ENCODE measurements at regions of chr6 and their contacts with region 1.

Region 1: DNA sequence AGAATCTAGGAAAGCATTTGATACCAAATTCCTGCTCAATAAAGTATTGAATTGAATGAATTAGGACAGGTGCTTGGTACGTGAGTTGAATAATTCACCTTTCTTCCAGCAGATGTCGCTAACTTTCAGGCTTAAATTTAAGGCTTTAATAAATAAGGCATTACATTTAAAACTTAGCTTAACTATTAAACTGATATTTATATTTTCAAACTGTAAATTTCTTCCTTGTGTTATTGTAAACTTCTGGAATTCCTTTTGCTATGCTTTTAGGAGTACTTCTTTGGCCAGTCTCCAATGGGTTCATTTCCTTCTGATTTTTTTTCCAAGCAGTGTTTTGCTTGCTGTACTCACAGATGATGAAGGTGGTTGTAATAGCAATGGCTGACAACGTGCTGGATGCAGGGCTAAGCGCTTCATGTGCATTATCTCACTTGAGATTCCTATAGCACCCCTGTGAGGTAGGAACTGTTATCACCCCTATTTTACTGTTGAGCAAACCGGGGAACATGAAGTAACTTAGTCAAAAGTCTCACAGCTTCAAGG is 71.3 kb upstream of the SLC2A12 start:
- DNase-seq: no peak
- H3K4me3 Mint-ChIP-seq: no peak overlapping the region
- H3K27ac Mint-ChIP-seq: no peak overlapping the region
- H3K4me1 Mint-ChIP-seq: no peaks in the 10 kb centered on the region
- H3K27me3 Mint-ChIP-seq: peaks cover 5% of the 10 kb centered on the region

Region 2: GRCh38 chr6:133854364-133855275 is 269.1 kb before region 1 on chr6:
- CTCF ChIA-PET with region 1: no interaction called
- DNase-seq: no peak
- H3K4me3 Mint-ChIP-seq: no peak overlapping the region
- H3K27ac Mint-ChIP-seq: no peak overlapping the region
- H3K4me1 Mint-ChIP-seq: no peaks in the 10 kb centered on the region
- H3K27me3 Mint-ChIP-seq: peaks cover 42% of the 10 kb centered on the region

Region 3: GRCh38 chr6:134090591-134090990 is 33.1 kb before region 1 on chr6:
- CTCF ChIA-PET with region 1: no interaction called
- DNase-seq: no peak
- H3K4me3 Mint-ChIP-seq: no peak overlapping the region
- H3K27ac Mint-ChIP-seq: no peak overlapping the region
- H3K4me1 Mint-ChIP-seq: peaks cover 4% of the 10 kb centered on the region
- H3K27me3 Mint-ChIP-seq: peaks cover 32% of the 10 kb centered on the region

Region 4: GRCh38 chr6:134111062-134111677 is 12.6 kb before region 1 on chr6:
- CTCF ChIA-PET with region 1: interaction called, 41 read pairs
- DNase-seq: peak; percentile 60
- H3K4me3 Mint-ChIP-seq: no peak overlapping the region
- H3K27ac Mint-ChIP-seq: no peak overlapping the region
- H3K4me1 Mint-ChIP-seq: peaks cover 4% of the 10 kb centered on the region
- H3K27me3 Mint-ChIP-seq: peaks cover 39% of the 10 kb centered on the region

Region 5: GRCh38 chr6:134161036-134161435 is 37.3 kb after region 1 on chr6:
- CTCF ChIA-PET with region 1: interaction called, 12 read pairs
- DNase-seq: no peak
- H3K4me3 Mint-ChIP-seq: no peak overlapping the region
- H3K27ac Mint-ChIP-seq: no peak overlapping the region
- H3K4me1 Mint-ChIP-seq: no peaks in the 10 kb centered on the region
- H3K27me3 Mint-ChIP-seq: no peaks in the 10 kb centered on the region

Region 6: GRCh38 chr6:134882426-134883038 is 758.8 kb after region 1 on chr6:
- CTCF ChIA-PET with region 1: interaction called, 22 read pairs
- DNase-seq: peak; percentile 71
- H3K4me3 Mint-ChIP-seq: no peak overlapping the region
- H3K27ac Mint-ChIP-seq: no peak overlapping the region
- H3K4me1 Mint-ChIP-seq: no peaks in the 10 kb centered on the region
- H3K27me3 Mint-ChIP-seq: peaks cover 13% of the 10 kb centered on the region

Measured in activated naive CD4-positive, alpha-beta T cell treated with anti-CD3 and anti-CD28 coated beads, Interleukin-2, amount 10 ng/mL, durations not matched to agents 7 days and 5 days (primary cell).